Sigmoid colon (tissue), 7 donors: ENCODE measurements at regions of chr22 and their contacts with region 1.

Region 1: GRCh38 chr22:31036671-31037550 is 44.2 kb upstream of the SMTN start:
- DNase-seq: peak; percentile 90
- H3K4me3 ChIP-seq: peak overlapping the region in 2 of 4 donors; percentile 2 to 28
- H3K27ac ChIP-seq: peak overlapping the region; percentile 85 to 92 (median 90)
- H3K4me1 ChIP-seq: peaks cover 0 to 58% (median 54%) of the 10 kb centered on the region in 4 donors
- H3K27me3 ChIP-seq: no peaks in the 10 kb centered on the region
- CTCF ChIP-seq: peak in 1 of 4 experiments; percentile 23
- EP300 ChIP-seq: peak in 3 of 4 donors; percentile 48 to 88 (median 84)
- POLR2A ChIP-seq: no peak

Region 2: GRCh38 chr22:30947816-30948454 is 89.0 kb before region 1 on chr22:
- intact Hi-C with region 1: loop called (anchors 5 kb)
- DNase-seq: no peak
- H3K4me3 ChIP-seq: no peak overlapping the region
- H3K27ac ChIP-seq: peak overlapping the region; percentile 55 to 74 (median 64)
- H3K4me1 ChIP-seq: peaks cover 0 to 26% (median 22%) of the 10 kb centered on the region in 4 donors
- H3K27me3 ChIP-seq: no peaks in the 10 kb centered on the region
- CTCF ChIP-seq: peak; percentile 59 to 85 (median 74)
- EP300 ChIP-seq: no peak
- POLR2A ChIP-seq: no peak

Region 3: DNA sequence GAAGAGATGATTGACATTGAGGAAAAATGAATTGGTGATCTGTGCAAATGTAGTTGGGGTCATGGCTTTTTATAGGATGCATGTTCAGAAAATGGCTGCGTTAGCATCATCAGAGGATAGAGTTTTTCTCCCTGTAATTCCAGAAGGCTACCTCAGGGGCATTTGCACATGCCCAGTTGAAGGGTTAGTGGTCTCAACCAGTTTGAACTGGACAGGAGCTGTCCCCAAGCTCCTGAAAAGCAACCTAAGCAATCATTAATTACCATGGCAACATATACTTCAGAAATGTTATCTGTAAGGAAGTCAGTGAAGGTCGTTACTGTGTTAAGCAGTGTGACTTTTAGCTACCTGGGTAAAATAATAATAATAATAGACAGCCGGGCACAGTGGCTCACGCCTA is 38.6 kb before region 1 on chr22:
- intact Hi-C with region 1: no loop called
- DNase-seq: no peak
- H3K4me3 ChIP-seq: no peak overlapping the region
- H3K27ac ChIP-seq: no peak overlapping the region
- H3K4me1 ChIP-seq: no peaks in the 10 kb centered on the region
- H3K27me3 ChIP-seq: no peaks in the 10 kb centered on the region
- CTCF ChIP-seq: no peak
- EP300 ChIP-seq: no peak
- POLR2A ChIP-seq: no peak

Region 4: GRCh38 chr22:31055635-31056159 is 18.8 kb after region 1 on chr22:
- intact Hi-C with region 1: loop called (anchors 2 kb)
- DNase-seq: peak; percentile 99
- H3K4me3 ChIP-seq: no peak overlapping the region
- H3K27ac ChIP-seq: peak overlapping the region; percentile 89 to 97 (median 90)
- H3K4me1 ChIP-seq: peaks cover 0 to 53% (median 45%) of the 10 kb centered on the region in 4 donors
- H3K27me3 ChIP-seq: no peaks in the 10 kb centered on the region
- CTCF ChIP-seq: no peak
- EP300 ChIP-seq: peak; percentile 40 to 99 (median 79)
- POLR2A ChIP-seq: no peak

Region 5: GRCh38 chr22:31080848-31081649 is 44.1 kb after region 1 on chr22 and contains the start of gene SMTN:
- intact Hi-C with region 1: loop called (anchors 1 kb)
- DNase-seq: peak; percentile 97
- H3K4me3 ChIP-seq: peak within 1 kb of the TSS; percentile 67 to 82 (median 80)
- H3K27ac ChIP-seq: peak within 1 kb of the TSS; percentile 96 to 100 (median 99)
- H3K4me1 ChIP-seq: peaks cover 0 to 51% (median 50%) of the 10 kb centered on the region in 4 donors
- H3K27me3 ChIP-seq: no peaks in the 10 kb centered on the region
- CTCF ChIP-seq: no peak
- EP300 ChIP-seq: no peak
- POLR2A ChIP-seq: peak; percentile 97
- total RNA-seq, gene SMTN: 987 to 1,789 (median 1,228) TPM